Activated B cell treated with CpG ODN at 0.5 μM for 24 hours (primary cell): ENCODE measurements at regions of chr19 and their contacts with region 1.

Region 1: GRCh38 chr19:2427429-2428320 is at the start of gene TIMM13:
- DNase-seq: peak; percentile 99
- ATAC-seq: peak; percentile 94
- H3K4me3 Mint-ChIP-seq: peak within 1 kb of the TSS; percentile 90
- H3K27ac Mint-ChIP-seq: peak within 1 kb of the TSS; percentile 95
- H3K4me1 Mint-ChIP-seq: peaks cover 21% of the 10 kb centered on the region
- H3K27me3 Mint-ChIP-seq: no peaks in the 10 kb centered on the region
- CTCF ChIP-seq: no peak
- total RNA-seq, gene TIMM13: 63.9 and 65.3 TPM in 2 replicates

Region 2: GRCh38 chr19:1985559-1986356 is 441.9 kb before region 1 on chr19:
- CTCF ChIA-PET with region 1: no interaction called
- POLR2A ChIA-PET with region 1: no interaction called
- intact Hi-C with region 1: no loop called
- DNase-seq: no peak
- ATAC-seq: no peak
- H3K4me3 Mint-ChIP-seq: no peak overlapping the region
- H3K27ac Mint-ChIP-seq: no peak overlapping the region
- H3K4me1 Mint-ChIP-seq: no peaks in the 10 kb centered on the region
- H3K27me3 Mint-ChIP-seq: no peaks in the 10 kb centered on the region
- CTCF ChIP-seq: no peak

Region 3: DNA sequence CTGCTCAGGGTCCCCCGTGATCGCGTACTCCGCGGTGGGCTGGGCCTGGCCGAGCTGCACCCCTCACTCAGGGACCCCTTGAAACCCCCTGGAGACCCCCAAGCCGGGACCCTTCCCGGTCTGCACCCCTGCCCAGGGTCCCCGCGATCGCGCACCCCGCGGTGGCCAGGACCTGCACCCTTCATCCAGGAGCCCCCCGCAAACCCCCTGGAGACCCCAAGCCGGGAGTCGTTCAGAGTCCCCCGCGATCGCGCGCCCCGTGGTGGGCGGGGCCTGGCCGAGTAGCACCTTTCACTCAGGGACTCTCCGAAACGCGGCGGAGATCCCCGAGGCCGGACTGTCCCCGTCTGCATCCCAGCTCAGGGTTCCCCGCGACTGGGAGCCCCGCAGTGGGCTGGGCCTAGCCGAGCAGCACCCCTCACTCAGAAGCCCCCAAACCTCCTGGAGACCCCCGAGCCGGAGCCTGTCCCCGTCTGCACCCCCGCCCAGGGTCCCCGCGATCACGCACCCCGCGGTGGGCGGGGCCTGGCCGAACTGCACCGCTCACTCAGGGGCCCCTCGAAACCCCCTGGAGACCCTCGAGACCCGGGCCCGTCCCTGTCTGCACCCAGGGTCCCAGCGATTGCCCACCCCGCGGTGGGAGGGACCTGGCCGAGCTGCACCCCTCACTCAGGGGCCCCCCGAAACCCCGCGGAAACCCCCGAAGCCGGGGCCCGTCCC is 28.3 kb after region 1 on chr19:
- CTCF ChIA-PET with region 1: interaction called, 3 read pairs
- POLR2A ChIA-PET with region 1: interaction called, 11 read pairs
- intact Hi-C with region 1: loop called (anchors 1 kb)
- DNase-seq: peak; percentile 51
- ATAC-seq: peak; percentile 53
- H3K4me3 Mint-ChIP-seq: peak overlapping the region; percentile 89
- H3K27ac Mint-ChIP-seq: peak overlapping the region; percentile 85
- H3K4me1 Mint-ChIP-seq: peaks cover 30% of the 10 kb centered on the region
- H3K27me3 Mint-ChIP-seq: no peaks in the 10 kb centered on the region
- CTCF ChIP-seq: no peak